CD8-positive, alpha-beta T cell (primary cell): ENCODE measurements at regions of chr1 and their contacts with region 1.

Region 1: GRCh38 chr1:115717541-115717940 is 51.0 kb downstream of the CASQ2 start:
- DNase-seq: peak in 4 of 9 experiments; percentile 15 to 41 (median 24)
- ATAC-seq: no peak
- H3K4me3 ChIP-seq: no peak overlapping the region
- H3K4me3 Mint-ChIP-seq: no peak overlapping the region
- H3K27ac ChIP-seq: no peak overlapping the region
- H3K27ac Mint-ChIP-seq: no peak overlapping the region
- H3K4me1 ChIP-seq: no peaks in the 10 kb centered on the region
- H3K4me1 Mint-ChIP-seq: no peaks in the 10 kb centered on the region
- H3K27me3 ChIP-seq: no peaks in the 10 kb centered on the region
- H3K27me3 Mint-ChIP-seq: peaks cover 4% of the 10 kb centered on the region
- CTCF ChIP-seq: no peak

Region 2: GRCh38 chr1:115706587-115707425 is 10.7 kb before region 1 on chr1:
- CTCF ChIA-PET with region 1: interaction called, 13 read pairs
- POLR2A ChIA-PET with region 1: no interaction called
- intact Hi-C with region 1: no loop called
- DNase-seq: peak in 2 of 9 experiments; percentile 33 to 46
- ATAC-seq: no peak
- H3K4me3 ChIP-seq: no peak overlapping the region
- H3K4me3 Mint-ChIP-seq: no peak overlapping the region
- H3K27ac ChIP-seq: no peak overlapping the region
- H3K27ac Mint-ChIP-seq: no peak overlapping the region
- H3K4me1 ChIP-seq: no peaks in the 10 kb centered on the region
- H3K4me1 Mint-ChIP-seq: no peaks in the 10 kb centered on the region
- H3K27me3 ChIP-seq: peaks cover 0 to 2% of the 10 kb centered on the region in 2 experiments
- H3K27me3 Mint-ChIP-seq: peaks cover 14% of the 10 kb centered on the region
- CTCF ChIP-seq: peak; percentile 71